GM12878 (cell line): ENCODE measurements at regions of chr2 and their contacts with region 1.

Region 1: GRCh38 chr2:226772389-226773179 is 27.0 kb downstream of the IRS1 start:
- DNase-seq: peak; percentile 82
- ATAC-seq: peak; percentile 97
- H3K4me3 ChIP-seq: no peak overlapping the region
- H3K27ac ChIP-seq: no peak overlapping the region
- H3K4me1 ChIP-seq: peaks cover 14% of the 10 kb centered on the region
- H3K27me3 ChIP-seq: no peaks in the 10 kb centered on the region
- CTCF ChIP-seq: no peak
- EP300 ChIP-seq: peak; percentile 92 to 95; a peak in 3 of 4 replicates
- POLR2A ChIP-seq: no peak
- RAD21 ChIP-seq: peak; percentile 5; the same call in 1 of the 2 replicates

Region 2: GRCh38 chr2:226760412-226761194 is 12.0 kb before region 1 on chr2:
- CTCF ChIA-PET with region 1: interaction called, 3 read pairs
- POLR2A ChIA-PET with region 1: no interaction called
- RAD21 ChIA-PET with region 1: no interaction called
- SMC1A ChIA-PET with region 1: interaction called, 10 read pairs
- in situ Hi-C with region 1: no loop called
- intact Hi-C with region 1: no loop called
- DNase-seq: no peak
- ATAC-seq: no peak
- H3K4me3 ChIP-seq: no peak overlapping the region
- H3K27ac ChIP-seq: no peak overlapping the region
- H3K4me1 ChIP-seq: no peaks in the 10 kb centered on the region
- H3K27me3 ChIP-seq: no peaks in the 10 kb centered on the region
- CTCF ChIP-seq: no peak
- EP300 ChIP-seq: no peak
- POLR2A ChIP-seq: no peak
- RAD21 ChIP-seq: no peak

Region 3: GRCh38 chr2:226791487-226792081 is 19.0 kb after region 1 on chr2:
- CTCF ChIA-PET with region 1: interaction called, 4 read pairs
- POLR2A ChIA-PET with region 1: interaction called, 10 read pairs
- RAD21 ChIA-PET with region 1: interaction called, 4 read pairs
- SMC1A ChIA-PET with region 1: interaction called, 26 read pairs
- in situ Hi-C with region 1: no loop called
- intact Hi-C with region 1: no loop called
- DNase-seq: peak; percentile 19
- ATAC-seq: peak; percentile 100
- H3K4me3 ChIP-seq: peak overlapping the region; percentile 63
- H3K27ac ChIP-seq: peak overlapping the region; percentile 81
- H3K4me1 ChIP-seq: peaks cover 6% of the 10 kb centered on the region
- H3K27me3 ChIP-seq: no peaks in the 10 kb centered on the region
- CTCF ChIP-seq: peak; percentile 19 to 33 (median 22); a peak in 3 of 6 replicates
- EP300 ChIP-seq: no peak
- POLR2A ChIP-seq: peak; percentile 79
- RAD21 ChIP-seq: no peak